ENCODE measurements at regions of chrX and their contacts with region 1.

Region 1: GRCh38 chrX:15471016-15471415 is 22.1 kb downstream of the PIR start:
- DNase-seq: peak; percentile 71
- H3K4me3 Mint-ChIP-seq: no peak overlapping the region
- H3K27ac Mint-ChIP-seq: no peak overlapping the region
- H3K4me1 Mint-ChIP-seq: no peaks in the 10 kb centered on the region
- H3K27me3 Mint-ChIP-seq: peaks cover 4% of the 10 kb centered on the region

Region 2: GRCh38 chrX:14095702-14096101 is 1375.3 kb before region 1 on chrX:
- CTCF ChIA-PET with region 1: no interaction called
- intact Hi-C with region 1: loop called (anchors 5 kb)
- DNase-seq: peak; percentile 56
- H3K4me3 Mint-ChIP-seq: no peak overlapping the region
- H3K27ac Mint-ChIP-seq: no peak overlapping the region
- H3K4me1 Mint-ChIP-seq: peaks cover 2% of the 10 kb centered on the region
- H3K27me3 Mint-ChIP-seq: no peaks in the 10 kb centered on the region

Region 3: DNA sequence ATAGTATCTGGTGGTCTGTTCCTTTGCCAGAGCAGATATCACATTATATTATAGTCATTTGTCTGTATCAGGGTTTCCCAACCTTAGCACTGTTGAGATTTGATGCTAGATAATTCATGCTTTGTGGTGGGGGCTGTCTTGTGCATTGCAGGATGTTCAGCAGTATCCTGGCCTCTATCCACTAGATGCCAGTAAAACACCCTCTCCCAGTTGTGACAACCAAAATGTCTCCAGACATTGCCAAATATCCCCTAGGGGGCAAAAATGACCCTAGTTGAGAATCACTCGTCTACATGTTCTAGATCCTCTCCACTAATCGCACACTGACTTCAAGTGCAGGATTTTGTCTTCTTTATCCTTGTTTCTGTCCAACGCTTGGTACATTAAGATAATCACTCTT is 758.9 kb before region 1 on chrX:
- CTCF ChIA-PET with region 1: no interaction called
- intact Hi-C with region 1: no loop called
- DNase-seq: no peak
- H3K4me3 Mint-ChIP-seq: no peak overlapping the region
- H3K27ac Mint-ChIP-seq: no peak overlapping the region
- H3K4me1 Mint-ChIP-seq: no peaks in the 10 kb centered on the region
- H3K27me3 Mint-ChIP-seq: no peaks in the 10 kb centered on the region

Region 4: DNA sequence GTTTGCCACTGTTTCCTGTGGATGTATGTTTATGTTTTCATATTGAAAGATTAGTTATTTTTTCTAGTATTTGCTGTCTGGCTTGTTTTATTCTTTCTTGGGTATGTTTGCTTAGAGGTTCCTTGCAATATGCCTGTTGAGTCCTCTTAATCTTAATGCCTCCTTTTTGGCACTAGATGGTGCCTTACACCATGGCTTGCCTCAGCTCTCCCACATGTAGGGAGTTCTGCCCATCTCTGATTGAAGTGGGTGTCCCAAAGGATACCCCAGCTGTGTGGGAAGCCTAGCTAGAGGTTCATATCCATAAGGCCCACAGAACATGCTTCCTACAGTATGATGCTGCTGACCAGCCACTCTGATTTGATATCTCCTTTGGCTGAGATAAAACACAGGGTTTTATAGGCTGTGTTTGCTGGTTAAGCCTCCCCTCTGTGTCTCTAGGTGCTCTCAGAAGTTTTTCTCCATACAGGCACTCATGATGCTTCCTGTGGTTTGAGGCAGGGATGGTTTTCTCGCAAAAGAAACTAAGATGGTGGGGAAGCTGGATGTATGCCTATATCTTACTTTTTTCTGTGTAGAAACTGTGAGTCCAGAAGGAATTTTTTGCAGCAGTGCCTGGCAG is 363.5 kb before region 1 on chrX:
- CTCF ChIA-PET with region 1: no interaction called
- intact Hi-C with region 1: loop called (anchors 10 kb)
- DNase-seq: peak; percentile 6
- H3K4me3 Mint-ChIP-seq: no peak overlapping the region
- H3K27ac Mint-ChIP-seq: no peak overlapping the region
- H3K4me1 Mint-ChIP-seq: peaks cover 6% of the 10 kb centered on the region
- H3K27me3 Mint-ChIP-seq: no peaks in the 10 kb centered on the region

Region 5: DNA sequence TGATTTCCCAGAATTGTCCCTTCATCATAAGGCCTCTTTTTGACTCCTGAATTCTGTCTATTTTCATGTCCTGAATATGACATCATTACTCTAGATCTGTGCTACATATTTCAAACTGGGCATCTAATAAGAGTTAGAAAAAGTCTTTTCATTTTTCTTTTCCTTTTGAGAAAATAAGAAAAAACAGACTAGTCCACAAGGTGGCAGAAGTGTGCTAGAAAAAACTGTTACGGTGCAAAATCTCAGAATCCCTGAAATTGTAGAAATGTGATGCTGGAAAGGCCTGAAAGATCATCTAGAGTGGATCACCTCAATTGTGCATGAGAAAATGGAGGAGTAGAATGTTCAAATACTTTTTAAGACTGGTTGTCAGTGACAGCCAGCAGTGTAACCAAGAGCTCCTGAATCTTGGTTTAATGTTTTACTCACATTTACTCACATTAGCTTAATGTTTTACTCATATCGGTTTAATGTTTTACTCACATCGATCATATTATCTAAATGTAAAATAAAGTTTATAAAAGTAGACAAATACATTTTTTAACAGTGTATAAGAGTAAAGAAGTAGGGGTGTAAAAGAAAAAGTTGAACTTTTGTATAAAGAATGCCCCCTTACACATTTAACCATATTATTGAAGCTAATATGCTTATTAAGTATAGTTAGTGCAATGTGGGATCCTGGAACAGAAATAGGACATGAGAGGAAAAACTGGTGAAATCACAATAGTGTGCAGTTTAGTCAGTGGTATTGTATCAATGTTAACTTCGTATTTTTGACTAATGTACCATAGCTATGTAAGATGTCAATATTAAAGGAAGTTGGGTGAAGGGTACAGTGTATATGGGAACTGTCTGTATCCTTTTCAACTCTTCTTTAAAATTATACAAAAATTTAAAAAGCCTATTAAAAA is 170.8 kb before region 1 on chrX:
- CTCF ChIA-PET with region 1: interaction called, 7 read pairs
- intact Hi-C with region 1: loop called (anchors 1 kb)
- DNase-seq: no peak
- H3K4me3 Mint-ChIP-seq: no peak overlapping the region
- H3K27ac Mint-ChIP-seq: no peak overlapping the region
- H3K4me1 Mint-ChIP-seq: no peaks in the 10 kb centered on the region
- H3K27me3 Mint-ChIP-seq: no peaks in the 10 kb centered on the region

Region 6: GRCh38 chrX:15349046-15349445 is 122.0 kb before region 1 on chrX:
- CTCF ChIA-PET with region 1: interaction called, 19 read pairs
- intact Hi-C with region 1: loop called (anchors 1 kb)
- DNase-seq: peak; percentile 17
- H3K4me3 Mint-ChIP-seq: no peak overlapping the region
- H3K27ac Mint-ChIP-seq: no peak overlapping the region
- H3K4me1 Mint-ChIP-seq: no peaks in the 10 kb centered on the region
- H3K27me3 Mint-ChIP-seq: peaks cover 2% of the 10 kb centered on the region

Region 7: GRCh38 chrX:15564981-15565579 is 94.1 kb after region 1 on chrX:
- CTCF ChIA-PET with region 1: interaction called, 4 read pairs
- intact Hi-C with region 1: loop called (anchors 1 kb)
- DNase-seq: peak; percentile 46
- H3K4me3 Mint-ChIP-seq: no peak overlapping the region
- H3K27ac Mint-ChIP-seq: no peak overlapping the region
- H3K4me1 Mint-ChIP-seq: no peaks in the 10 kb centered on the region
- H3K27me3 Mint-ChIP-seq: peaks cover 4% of the 10 kb centered on the region

Region 8: DNA sequence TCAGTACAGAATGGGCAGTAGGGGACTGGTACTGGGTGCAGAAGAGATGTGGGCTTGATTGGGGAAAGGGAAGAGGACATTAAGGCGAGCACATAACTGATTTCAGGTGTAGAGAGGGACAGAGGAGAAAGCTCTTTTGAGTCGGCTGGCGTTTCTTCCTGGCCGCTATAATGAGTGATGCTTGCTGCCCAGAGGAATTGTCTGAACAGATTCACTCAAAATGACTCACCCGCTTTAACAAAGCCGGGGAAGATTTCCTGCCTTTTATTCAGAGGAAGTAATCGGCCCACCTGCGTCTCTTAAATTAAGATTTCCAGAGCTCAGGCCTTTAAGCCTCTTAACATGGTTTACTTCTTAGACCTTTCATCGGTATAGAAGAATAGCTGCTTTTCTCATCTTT is 485.7 kb after region 1 on chrX:
- CTCF ChIA-PET with region 1: no interaction called
- intact Hi-C with region 1: no loop called
- DNase-seq: no peak
- H3K4me3 Mint-ChIP-seq: no peak overlapping the region
- H3K27ac Mint-ChIP-seq: no peak overlapping the region
- H3K4me1 Mint-ChIP-seq: no peaks in the 10 kb centered on the region
- H3K27me3 Mint-ChIP-seq: no peaks in the 10 kb centered on the region

Measured in activated naive CD4-positive, alpha-beta T cell treated with anti-CD3 and anti-CD28 coated beads for 36 hours (primary cell).